Gastrocnemius medialis (tissue), 4 donors: ENCODE measurements at regions of chr11 and their contacts with region 1.

Region 1: GRCh38 chr11:16605894-16606783 is 132.3 kb upstream of the C11orf58 start:
- DNase-seq: peak; percentile 90 to 92
- ATAC-seq: peak; percentile 52 to 54
- H3K4me3 ChIP-seq: peak overlapping the region; percentile 70 to 98 (median 94)
- H3K27ac ChIP-seq: peak overlapping the region; percentile 91 to 99 (median 96)
- H3K4me1 ChIP-seq: peaks cover 14 to 33% of the 10 kb centered on the region in 2 donors
- H3K27me3 ChIP-seq: peaks cover 0 to 3% (median 0%) of the 10 kb centered on the region in 3 donors
- CTCF ChIP-seq: peak; percentile 96 to 98 (median 97)
- POLR2A ChIP-seq: peak; percentile 81 to 89

Region 2: GRCh38 chr11:15650105-15650938 is 955.8 kb before region 1 on chr11:
- in situ Hi-C with region 1: loop called (anchors 10 to 25 kb)
- intact Hi-C with region 1: loop called (anchors 5 kb)
- DNase-seq: peak; percentile 79 to 83
- ATAC-seq: peak; percentile 92
- H3K4me3 ChIP-seq: peak overlapping the region; percentile 44 to 56 (median 50)
- H3K27ac ChIP-seq: peak overlapping the region; percentile 50 to 72 (median 61)
- H3K4me1 ChIP-seq: peaks cover 9 to 23% of the 10 kb centered on the region in 2 donors
- H3K27me3 ChIP-seq: no peaks in the 10 kb centered on the region
- CTCF ChIP-seq: peak; percentile 91 to 98 (median 96)
- POLR2A ChIP-seq: no peak

Region 3: DNA sequence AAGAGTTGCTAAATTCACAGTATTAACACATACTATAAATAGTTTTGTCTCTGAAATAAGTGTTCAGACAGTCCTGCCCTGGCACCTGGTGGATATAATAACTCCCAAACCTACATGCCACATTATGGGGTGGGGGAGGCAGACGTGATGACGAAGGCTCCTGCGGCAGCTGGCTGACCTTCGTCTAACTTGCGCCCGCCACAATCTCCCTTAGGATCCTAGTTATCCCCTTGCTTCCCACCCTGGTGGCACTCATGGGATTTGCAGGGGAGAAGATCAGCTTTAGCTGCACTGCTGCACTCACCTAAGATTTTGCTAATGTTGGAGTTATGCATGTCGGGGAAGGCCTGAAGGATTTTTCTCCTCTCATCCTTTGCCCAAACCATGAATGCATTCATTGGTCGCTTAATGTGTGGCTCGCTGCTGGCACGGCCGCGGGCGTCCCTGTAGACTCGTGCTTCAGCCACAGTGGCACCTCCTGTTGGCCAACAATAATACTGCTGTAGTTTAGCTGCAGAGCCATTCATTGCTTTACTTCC is 617.4 kb before region 1 on chr11:
- in situ Hi-C with region 1: loop called in 1 of 4 experiments (anchors 25 kb)
- intact Hi-C with region 1: no loop called
- DNase-seq: peak in 1 of 2 donors; percentile 36
- ATAC-seq: peak; percentile 86 to 91
- H3K4me3 ChIP-seq: no peak overlapping the region
- H3K27ac ChIP-seq: peak overlapping the region in 1 of 4 donors; percentile 23
- H3K4me1 ChIP-seq: peaks cover 23 to 28% of the 10 kb centered on the region in 2 donors
- H3K27me3 ChIP-seq: no peaks in the 10 kb centered on the region
- CTCF ChIP-seq: peak; percentile 40 to 64 (median 46)
- POLR2A ChIP-seq: no peak

Region 4: GRCh38 chr11:16184588-16184987 is 421.6 kb before region 1 on chr11:
- in situ Hi-C with region 1: loop called in 3 of 4 experiments (anchors 10 to 25 kb)
- intact Hi-C with region 1: loop called (anchors 2 kb)
- DNase-seq: peak in 1 of 2 donors; percentile 49
- ATAC-seq: peak; percentile 37 to 93
- H3K4me3 ChIP-seq: no peak overlapping the region
- H3K27ac ChIP-seq: peak overlapping the region; percentile 82 to 87 (median 84)
- H3K4me1 ChIP-seq: peaks cover 44 to 45% of the 10 kb centered on the region in 2 donors
- H3K27me3 ChIP-seq: no peaks in the 10 kb centered on the region
- CTCF ChIP-seq: no peak
- POLR2A ChIP-seq: peak in 1 of 2 donors; percentile 29

Region 5: GRCh38 chr11:16460508-16460907 is 145.6 kb before region 1 on chr11:
- in situ Hi-C with region 1: no loop called
- intact Hi-C with region 1: loop called (anchors 2 kb)
- DNase-seq: no peak
- ATAC-seq: peak; percentile 95 to 96
- H3K4me3 ChIP-seq: no peak overlapping the region
- H3K27ac ChIP-seq: peak overlapping the region; percentile 59 to 80 (median 72)
- H3K4me1 ChIP-seq: peaks cover 43 to 62% of the 10 kb centered on the region in 2 donors
- H3K27me3 ChIP-seq: no peaks in the 10 kb centered on the region
- CTCF ChIP-seq: no peak
- POLR2A ChIP-seq: no peak

Region 6: DNA sequence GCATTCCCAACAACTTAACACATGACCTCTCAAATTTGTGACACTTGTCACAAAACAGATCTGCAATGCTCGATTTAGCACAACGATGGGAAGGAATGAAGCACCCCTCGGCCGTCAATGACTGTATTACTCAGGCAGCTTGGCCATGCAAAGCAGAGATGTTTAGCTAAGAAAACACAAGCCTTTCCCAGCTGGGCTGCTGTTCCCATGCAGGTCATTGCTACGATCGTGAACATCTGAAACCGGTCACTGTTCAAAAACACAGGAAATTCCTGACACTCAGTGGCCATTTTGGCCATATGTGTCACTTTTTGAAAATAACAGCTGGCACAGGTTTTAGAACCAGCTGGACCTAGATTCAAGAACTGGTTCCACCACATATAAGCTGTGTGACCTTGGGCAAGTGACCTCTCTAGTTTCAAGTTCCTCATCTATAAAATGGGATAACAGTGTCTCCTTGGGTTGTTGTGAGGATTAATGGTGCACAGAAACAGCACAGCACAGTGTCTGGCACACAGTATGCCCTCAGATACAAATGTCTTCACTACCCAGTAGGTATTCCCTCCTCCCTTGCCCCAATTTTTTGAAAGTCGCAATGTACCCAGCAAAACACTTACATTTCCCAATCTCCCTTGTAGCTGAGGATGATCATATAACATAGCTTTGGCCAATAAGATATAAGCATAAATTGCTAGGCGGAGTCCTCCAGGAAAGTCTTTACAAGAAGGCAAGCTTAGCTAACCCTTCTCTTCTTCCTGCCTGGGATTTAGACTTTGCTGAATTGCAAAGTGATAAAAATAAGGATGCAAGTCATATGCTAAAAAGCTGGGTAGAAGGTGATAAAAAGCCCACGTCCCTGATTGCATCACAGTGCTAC is 225.4 kb after region 1 on chr11:
- in situ Hi-C with region 1: no loop called
- intact Hi-C with region 1: no loop called
- DNase-seq: no peak
- ATAC-seq: no peak
- H3K4me3 ChIP-seq: no peak overlapping the region
- H3K27ac ChIP-seq: no peak overlapping the region
- H3K4me1 ChIP-seq: no peaks in the 10 kb centered on the region
- H3K27me3 ChIP-seq: no peaks in the 10 kb centered on the region
- CTCF ChIP-seq: no peak
- POLR2A ChIP-seq: no peak

Region 7: DNA sequence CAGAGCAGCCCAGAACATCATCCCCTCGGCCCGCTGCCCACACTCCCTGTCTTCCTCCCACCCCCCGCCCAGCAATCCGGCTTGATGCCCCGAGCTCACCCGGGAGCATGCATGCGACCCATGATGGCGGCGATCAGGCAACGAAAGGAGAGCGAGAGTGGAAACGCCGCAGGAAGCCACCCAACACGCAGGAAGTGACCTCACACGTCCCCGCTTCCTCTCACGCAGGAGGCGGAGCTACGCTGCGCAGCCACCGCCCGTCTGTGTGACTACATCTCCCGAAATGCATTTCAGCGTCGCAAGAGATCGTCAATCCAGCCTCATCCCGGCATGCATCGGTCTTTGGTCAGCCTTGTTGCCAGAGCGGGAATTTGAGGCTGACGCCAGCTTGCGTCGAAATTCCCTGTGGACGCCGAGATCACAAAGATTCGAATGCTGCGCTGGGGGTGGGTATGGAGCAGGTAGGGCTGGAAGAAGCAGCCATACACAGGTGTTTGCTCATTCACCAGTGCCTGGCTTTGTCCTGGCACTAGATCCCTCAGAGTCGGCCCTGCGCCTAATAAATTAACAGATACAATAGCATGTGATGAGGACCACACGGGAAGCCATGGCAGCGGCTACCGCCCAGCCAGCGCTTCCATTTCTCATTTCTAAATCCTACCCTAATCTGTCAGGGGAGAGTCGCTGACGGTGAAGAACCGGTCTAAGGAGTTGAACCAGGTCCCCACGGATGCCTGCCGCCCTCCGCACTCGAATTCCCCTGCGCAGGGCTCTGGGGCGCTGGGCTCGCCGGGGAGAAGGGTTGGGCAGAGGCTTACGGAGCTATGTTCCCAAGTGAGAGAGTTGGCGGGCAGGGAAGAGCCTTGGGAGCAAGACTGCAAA is 471.6 kb after region 1 on chr11 and contains the start of gene RPS13:
- in situ Hi-C with region 1: no loop called
- intact Hi-C with region 1: loop called (anchors 5 kb)
- DNase-seq: peak; percentile 97
- ATAC-seq: peak; percentile 99
- H3K4me3 ChIP-seq: peak within 1 kb of the TSS; percentile 93 to 98 (median 97)
- H3K27ac ChIP-seq: peak within 1 kb of the TSS; percentile 96 to 97 (median 97)
- H3K4me1 ChIP-seq: peaks cover 26 to 27% of the 10 kb centered on the region in 2 donors
- H3K27me3 ChIP-seq: no peaks in the 10 kb centered on the region
- CTCF ChIP-seq: no peak
- POLR2A ChIP-seq: peak; percentile 85 to 86
- total RNA-seq, gene RPS13: 1,365 to 1,604 (median 1,491) TPM